ENCODE measurements at regions of chr6 and their contacts with region 1.

Region 1: DNA sequence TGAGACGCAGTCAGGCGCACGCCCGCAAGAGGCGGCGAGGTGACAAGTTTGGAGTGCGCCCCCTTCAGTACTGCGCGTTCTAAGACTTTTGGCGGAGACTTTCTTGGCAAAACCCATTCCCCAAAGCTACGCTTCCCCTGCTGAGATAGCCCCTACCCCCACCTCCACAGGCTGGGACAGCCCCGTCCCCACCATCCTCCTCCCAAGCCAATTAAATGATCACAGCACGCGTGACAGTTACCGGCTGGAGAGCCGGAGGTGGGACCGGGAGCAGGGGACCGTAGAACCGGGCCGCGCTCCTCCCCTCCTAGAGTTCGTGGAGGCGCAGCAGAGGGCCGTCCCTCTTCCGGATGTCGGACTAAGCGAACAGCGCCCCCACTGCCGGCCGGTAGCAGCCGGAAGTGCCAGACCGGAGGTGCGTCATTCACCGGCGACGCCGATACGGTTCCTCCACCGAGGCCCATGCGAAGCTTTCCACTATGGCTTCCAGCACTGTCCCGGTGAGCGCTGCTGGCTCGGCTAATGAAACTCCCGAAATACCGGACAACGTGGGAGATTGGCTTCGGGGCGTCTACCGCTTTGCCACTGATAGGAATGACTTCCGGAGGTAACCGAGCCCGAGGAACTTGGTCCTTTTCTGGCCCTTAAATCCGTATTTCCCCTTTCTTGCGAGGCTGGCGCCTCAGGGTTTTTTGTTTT is at the start of gene TOMM6:
- DNase-seq: peak; percentile 84 to 96

Region 2: DNA sequence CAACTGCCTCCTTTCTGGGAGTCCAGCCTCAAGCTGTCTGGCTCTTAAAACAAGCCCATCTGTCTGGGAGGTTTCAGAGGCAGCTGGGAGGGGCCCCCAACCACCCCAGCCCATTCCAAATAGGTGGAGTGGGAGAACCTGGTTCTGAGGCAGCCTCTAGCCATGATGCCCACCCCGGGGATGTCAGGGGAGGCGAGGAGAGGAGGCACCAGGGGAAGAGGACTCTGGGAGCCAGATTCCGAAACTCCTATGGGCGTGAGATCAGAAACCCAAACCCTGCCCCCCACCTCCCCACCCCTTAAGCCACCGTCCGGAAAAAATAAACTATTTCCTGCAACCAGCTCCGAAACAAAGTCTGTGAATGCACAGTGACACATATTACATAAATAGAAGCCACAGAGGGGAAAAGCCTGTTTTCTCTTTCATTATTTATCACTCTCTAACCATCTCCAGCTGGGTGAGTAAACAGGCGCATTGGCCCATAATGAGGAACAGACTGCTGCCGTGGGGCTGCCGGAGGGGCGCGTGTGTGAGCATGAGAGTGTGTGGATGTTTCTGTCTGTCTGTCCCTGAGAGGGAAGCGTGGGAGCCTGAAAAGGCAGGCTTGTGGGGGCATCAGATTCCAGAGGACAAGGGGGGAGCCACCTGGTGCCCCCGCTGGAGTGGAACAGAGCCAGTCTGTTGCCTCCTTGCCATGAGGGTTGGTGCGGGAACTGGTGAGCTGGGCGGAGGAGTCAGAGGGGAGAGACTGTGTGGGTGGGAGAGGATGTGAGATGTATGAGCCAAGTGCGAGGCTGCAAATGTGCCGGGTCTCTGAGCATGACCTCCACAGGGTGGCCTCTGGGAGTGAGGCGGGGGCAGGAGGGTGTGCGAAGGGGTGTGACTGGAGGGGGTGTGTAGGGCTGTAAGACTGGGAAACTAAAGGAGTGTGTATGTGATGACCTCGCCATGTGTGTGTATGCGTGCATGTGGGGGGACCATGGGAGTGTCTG is 255.5 kb before region 1 on chr6:
- in situ Hi-C with region 1: no loop called
- DNase-seq: peak in 1 of 2 experiments; percentile 64

Region 3: DNA sequence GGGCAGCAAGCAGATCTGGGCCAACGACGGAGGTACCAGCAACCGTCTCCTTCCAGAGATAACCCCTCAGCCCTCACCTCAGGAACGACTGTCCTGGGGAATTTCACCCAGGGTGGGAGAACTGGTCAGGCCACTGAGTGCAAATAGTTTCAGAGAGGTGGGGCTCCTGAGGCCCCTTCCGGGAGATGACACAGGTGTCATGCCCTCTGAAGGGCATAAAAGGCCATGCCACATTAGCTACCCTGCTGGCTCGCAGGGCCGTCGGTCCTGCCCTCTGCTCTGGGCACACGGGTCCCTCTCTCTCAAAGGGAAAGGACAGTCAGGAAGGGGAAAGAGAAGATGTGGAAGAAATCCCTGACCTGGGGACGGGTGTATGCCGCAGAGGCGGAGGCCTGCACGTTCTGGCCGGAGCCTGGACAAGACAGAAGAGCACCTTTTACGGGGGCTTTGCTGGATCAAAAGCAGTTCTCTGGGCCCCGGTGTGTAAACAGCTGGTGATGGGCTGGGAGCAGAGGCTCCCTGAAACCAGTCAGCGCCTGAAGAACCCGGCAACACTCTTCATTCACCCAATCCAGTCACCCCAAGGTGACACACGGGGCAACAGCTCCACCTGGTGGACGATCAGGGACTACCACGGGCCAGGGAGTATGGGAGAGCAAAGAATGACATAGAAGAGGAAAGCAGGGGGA is 256.6 kb after region 1 on chr6:
- in situ Hi-C with region 1: loop called (anchors 25 kb)
- DNase-seq: peak; percentile 90 to 92